ENCODE measurements at regions of chr9 and their contacts with region 1.

Region 1: DNA sequence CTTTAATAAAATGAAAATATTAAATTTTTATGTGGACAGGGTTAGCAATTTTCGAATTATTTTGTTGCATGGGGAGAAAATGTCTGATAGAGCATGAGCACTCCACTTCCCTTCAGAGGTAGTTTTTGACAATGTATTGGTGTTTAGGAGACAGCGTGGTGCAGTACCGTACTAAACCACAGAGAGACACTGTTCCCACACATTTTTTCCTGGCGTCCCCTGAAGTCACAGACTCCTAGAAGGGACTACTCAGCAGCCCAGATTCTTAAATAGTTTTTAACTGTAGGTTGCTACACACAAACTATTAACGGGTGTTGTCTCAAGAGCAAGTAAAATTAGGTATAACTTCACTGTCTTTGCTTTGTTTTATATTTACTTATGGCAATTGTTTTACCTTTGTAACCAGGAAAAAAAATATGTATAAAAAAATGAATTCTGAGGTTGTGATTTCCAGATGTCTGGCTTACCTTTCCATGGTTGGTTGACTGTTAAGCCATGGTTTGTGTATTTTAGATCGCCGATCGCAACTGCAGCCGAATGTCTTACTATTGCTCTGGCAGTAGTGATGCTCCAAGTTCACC is 171.2 kb downstream of the DOCK8 start:
- DNase-seq: peak; percentile 52
- ATAC-seq: peak; percentile 99
- H3K4me3 ChIP-seq: no peak overlapping the region
- H3K27ac ChIP-seq: no peak overlapping the region
- H3K4me1 ChIP-seq: no peaks in the 10 kb centered on the region
- H3K27me3 ChIP-seq: peaks cover 3% of the 10 kb centered on the region
- CTCF ChIP-seq: peak; percentile 81
- POLR2A ChIP-seq: no peak
- RAD21 ChIP-seq: peak; percentile 80

Region 2: DNA sequence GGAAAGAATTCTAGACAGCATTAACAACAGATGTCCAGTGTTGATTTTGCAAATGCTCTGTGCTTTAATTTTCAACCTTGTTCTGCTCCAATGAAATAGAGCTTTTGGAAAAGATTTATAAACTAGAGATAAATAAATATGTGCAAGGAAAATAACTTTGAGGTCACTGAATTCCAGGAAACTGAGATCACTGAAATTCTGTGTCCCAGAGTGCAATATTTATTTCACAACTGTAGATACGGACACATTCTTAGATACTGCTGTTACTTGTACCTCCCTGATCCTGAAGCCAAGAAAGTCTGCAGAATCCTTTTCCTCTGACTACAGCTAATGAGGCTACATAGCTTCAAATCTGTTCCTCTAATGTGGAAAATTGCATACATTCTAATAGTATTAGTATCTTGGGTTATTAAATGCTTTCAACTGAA is 51.7 kb after region 1 on chr9:
- CTCF ChIA-PET with region 1: no interaction called
- POLR2A ChIA-PET with region 1: no interaction called
- dilution Hi-C with region 1: no loop called
- in situ Hi-C with region 1: no loop called
- intact Hi-C with region 1: loop called (anchors 10 kb)
- DNase-seq: peak; percentile 77
- ATAC-seq: peak; percentile 83
- H3K4me3 ChIP-seq: no peak overlapping the region
- H3K27ac ChIP-seq: peak overlapping the region; percentile 98; the same call in 1 of the 2 replicates
- H3K4me1 ChIP-seq: peaks cover 13% of the 10 kb centered on the region
- H3K27me3 ChIP-seq: peaks cover 4% of the 10 kb centered on the region
- CTCF ChIP-seq: no peak
- POLR2A ChIP-seq: no peak
- RAD21 ChIP-seq: no peak

Region 3: DNA sequence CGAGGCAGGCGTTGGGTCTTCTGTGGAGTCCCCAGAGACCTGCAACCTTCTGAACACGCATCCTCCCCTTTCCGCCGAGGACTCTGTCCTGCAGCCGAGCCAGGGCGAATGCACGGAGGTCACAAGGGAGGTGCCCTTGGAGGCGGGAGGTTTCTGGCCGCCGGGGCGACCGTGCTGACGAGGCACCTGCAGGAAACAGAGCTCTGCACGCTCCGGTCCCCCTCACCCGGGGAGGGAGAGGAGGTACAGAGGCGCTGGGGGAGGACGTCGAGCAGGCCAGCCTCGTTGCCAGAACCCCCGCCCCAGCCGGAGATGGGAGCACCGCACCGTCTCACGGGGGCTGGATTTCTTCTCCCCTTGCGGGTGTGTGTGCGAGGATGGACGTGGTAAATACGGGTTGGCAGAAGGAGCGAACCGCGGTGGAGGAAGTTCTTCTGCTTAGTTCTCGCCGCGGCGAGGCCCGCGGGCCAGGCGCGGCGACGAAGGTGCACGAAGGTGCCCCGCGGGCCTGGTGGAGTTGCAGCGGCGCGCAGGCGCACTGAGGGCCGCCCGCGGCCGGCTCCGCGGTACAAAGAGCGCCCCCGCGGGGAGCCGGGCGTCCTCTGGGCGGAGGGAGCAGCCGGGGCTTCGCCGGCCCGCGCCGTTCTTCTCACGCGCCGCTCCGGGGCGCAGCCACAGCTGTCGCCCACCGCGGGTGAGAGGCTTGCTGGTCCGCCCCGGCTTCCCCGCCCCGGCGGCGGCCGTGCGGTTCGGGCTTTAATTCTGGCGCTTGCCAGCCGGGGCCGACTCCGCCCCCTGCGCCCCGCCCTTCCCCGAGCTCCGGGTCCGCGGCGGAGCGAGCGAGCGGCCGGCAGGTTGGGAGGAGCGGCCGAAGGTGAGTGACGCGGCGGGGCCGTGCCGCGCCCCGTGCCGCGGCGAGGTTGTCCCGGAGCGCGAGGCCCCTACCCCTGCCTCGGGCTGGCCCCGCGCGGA is 118.3 kb after region 1 on chr9:
- CTCF ChIA-PET with region 1: no interaction called
- POLR2A ChIA-PET with region 1: no interaction called
- dilution Hi-C with region 1: no loop called
- in situ Hi-C with region 1: no loop called
- intact Hi-C with region 1: loop called (anchors 2 kb)
- DNase-seq: peak; percentile 24
- ATAC-seq: peak; percentile 94
- H3K4me3 ChIP-seq: peak within 1 kb of the TSS; percentile 47
- H3K27ac ChIP-seq: no peak within 1 kb of the TSS
- H3K4me1 ChIP-seq: no peaks in the 10 kb centered on the region; the same call in 1 of the 2 replicates
- H3K27me3 ChIP-seq: peaks cover 27% of the 10 kb centered on the region
- CTCF ChIP-seq: peak; percentile 33
- POLR2A ChIP-seq: no peak
- RAD21 ChIP-seq: 0 out of 2 replicates have a peak, but pooled peaks have one; percentile 9

Region 4: DNA sequence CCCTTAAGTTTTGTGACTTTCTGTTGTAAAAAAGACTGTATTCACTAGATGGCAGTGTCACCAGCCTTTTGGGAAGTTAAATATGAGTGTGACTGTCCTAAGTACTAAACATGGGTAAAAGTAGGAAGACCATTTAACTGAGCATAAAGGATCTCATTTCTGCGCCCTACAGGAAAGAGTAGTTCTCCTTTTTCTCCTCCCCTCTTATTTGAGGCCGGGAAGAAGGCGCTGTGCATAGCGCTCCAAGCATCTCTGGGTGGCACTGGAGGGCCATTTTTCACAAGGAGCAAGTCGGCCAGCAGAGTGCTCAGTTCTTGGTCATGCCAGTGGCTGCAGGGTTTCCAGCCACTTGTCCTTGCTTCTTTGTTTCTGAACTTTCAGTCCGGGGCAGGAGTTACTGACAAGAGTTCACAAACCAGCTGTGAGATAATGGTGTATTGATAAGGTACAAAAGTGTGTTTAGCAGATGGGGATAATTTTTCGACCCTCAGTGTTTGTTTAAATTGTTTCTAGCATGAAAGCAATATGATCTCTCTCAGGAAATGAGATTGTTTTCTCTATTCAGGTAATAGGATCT is 228.0 kb after region 1 on chr9:
- CTCF ChIA-PET with region 1: no interaction called
- POLR2A ChIA-PET with region 1: no interaction called
- dilution Hi-C with region 1: no loop called
- in situ Hi-C with region 1: no loop called
- intact Hi-C with region 1: loop called (anchors 1 kb)
- DNase-seq: peak; percentile 91
- ATAC-seq: peak; percentile 97
- H3K4me3 ChIP-seq: no peak overlapping the region
- H3K27ac ChIP-seq: no peak overlapping the region
- H3K4me1 ChIP-seq: peaks cover 3% of the 10 kb centered on the region
- H3K27me3 ChIP-seq: no peaks in the 10 kb centered on the region
- CTCF ChIP-seq: peak; percentile 95
- POLR2A ChIP-seq: peak; percentile 48
- RAD21 ChIP-seq: peak; percentile 93

Region 5: DNA sequence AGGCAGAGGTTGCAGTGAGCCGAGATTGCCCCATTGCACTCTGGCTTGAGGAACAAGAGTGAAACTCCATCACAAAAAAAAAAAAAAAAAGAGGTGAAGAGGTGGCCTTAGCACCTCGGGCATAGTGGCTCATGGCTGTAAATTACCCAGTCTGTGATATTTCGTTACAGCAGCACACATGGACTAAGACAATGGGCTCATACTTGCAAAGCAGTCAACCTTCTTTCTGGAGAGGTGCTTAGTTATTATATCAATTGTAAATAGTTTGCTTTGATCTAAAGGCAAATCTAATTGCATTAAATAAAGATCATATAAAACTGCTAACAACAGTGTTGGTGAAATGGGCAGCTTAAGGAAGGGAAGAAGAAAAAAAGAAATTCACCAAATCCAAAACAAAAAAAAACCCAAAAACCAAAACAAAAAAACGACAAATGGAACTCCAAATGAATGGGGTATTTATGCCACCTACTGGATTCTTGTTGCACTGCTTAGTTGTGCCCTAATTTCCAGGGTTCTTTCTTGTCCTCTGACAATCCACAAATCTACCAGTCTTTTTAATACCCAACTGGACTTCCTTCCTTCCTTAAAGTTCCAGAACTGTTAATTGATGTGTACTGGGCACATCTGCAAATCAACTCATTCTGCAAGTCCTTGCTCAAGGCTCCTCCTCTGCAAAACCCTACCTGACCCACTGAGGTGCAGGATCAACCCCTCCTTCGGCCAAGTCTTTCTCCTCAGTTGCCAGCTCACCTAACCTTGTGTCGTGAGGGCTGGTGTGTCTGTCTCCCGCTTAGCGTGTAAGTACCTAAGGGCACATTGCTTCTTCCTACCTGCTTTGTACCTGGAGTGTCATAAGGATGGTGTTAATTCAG is 420.6 kb after region 1 on chr9:
- CTCF ChIA-PET with region 1: no interaction called
- POLR2A ChIA-PET with region 1: no interaction called
- dilution Hi-C with region 1: no loop called
- in situ Hi-C with region 1: no loop called
- intact Hi-C with region 1: loop called (anchors 1 kb)
- DNase-seq: peak; percentile 51
- ATAC-seq: peak; percentile 37; the same call in 1 of the 2 replicates
- H3K4me3 ChIP-seq: no peak overlapping the region
- H3K27ac ChIP-seq: no peak overlapping the region
- H3K4me1 ChIP-seq: peaks cover 8% of the 10 kb centered on the region
- H3K27me3 ChIP-seq: no peaks in the 10 kb centered on the region
- CTCF ChIP-seq: peak; percentile 92
- POLR2A ChIP-seq: no peak
- RAD21 ChIP-seq: peak; percentile 88